Caco-2 (cell line): ENCODE measurements at regions of chr4 and their contacts with region 1.

Region 1: DNA sequence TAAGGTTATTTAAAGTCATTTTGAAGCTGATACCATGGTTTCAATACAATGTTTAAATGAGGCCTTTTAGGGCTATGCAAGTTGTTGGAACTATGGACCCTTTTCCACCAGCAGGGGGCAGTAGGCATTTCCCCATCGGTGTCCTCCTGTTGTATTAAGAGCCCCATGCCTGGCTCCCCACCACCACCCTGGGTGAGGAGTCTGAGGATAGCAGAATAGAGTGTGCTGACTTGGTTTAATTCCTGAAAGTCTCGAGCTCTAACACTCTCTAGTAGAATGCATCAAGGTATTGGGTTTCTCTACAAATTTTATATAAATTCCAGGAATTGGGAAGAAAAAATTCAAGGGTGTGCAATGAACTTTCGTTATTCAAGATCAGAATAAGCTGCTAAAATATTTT is 234.8 kb upstream of the JADE1 start:
- DNase-seq: peak; percentile 71 to 84
- H3K4me3 ChIP-seq: no peak overlapping the region
- H3K4me3 Mint-ChIP-seq: no peak overlapping the region
- H3K27ac Mint-ChIP-seq: peak overlapping the region; percentile 81
- H3K4me1 ChIP-seq: peaks cover 41% of the 10 kb centered on the region
- H3K4me1 Mint-ChIP-seq: peaks cover 34% of the 10 kb centered on the region
- H3K27me3 ChIP-seq: no peaks in the 10 kb centered on the region
- H3K27me3 Mint-ChIP-seq: no peaks in the 10 kb centered on the region
- CTCF ChIP-seq: peak; percentile 41 to 77

Region 2: DNA sequence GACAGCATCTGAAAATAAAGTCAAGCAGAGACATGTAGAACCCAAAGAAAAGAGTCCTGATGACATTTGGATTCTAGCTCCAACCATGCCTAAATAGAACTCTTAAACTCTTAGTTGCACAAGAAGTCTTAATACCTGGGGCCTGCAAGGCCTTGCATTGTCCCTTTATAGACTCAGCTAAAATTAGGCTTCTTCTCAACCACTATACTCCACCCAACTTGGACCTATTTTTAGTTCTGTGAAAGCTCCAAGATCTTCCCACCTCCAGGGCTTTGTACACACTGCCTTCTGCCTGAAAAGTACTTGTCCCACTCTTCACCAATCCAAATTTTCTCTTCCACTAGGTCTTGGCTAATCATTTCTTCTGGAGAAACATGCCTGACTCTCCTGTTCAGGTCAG is 657.6 kb before region 1 on chr4:
- CTCF ChIA-PET with region 1: no interaction called
- POLR2A ChIA-PET with region 1: no interaction called
- intact Hi-C with region 1: no loop called
- DNase-seq: no peak
- H3K4me3 ChIP-seq: no peak overlapping the region
- H3K4me3 Mint-ChIP-seq: no peak overlapping the region
- H3K27ac Mint-ChIP-seq: no peak overlapping the region
- H3K4me1 ChIP-seq: no peaks in the 10 kb centered on the region
- H3K4me1 Mint-ChIP-seq: no peaks in the 10 kb centered on the region
- H3K27me3 ChIP-seq: no peaks in the 10 kb centered on the region
- H3K27me3 Mint-ChIP-seq: no peaks in the 10 kb centered on the region
- CTCF ChIP-seq: no peak

Region 3: DNA sequence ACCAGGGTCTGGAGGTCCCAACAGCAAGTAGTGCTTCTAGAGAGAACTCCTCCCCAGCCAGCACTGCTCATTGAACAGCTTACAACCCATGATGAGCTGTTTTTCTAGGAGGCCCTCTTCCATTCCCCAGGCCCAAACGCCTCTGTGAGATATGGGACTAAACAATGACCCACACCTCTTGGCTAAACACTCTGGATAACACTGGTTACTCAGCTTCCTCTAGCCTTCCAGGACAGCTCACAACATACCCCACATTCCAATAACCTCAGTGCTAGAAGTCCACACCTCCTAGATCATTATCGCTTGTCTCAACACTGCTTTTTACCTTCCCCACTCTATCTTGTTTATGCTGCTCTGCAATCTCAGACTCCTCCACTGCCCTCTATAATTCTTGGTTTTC is 251.7 kb before region 1 on chr4:
- CTCF ChIA-PET with region 1: no interaction called
- POLR2A ChIA-PET with region 1: no interaction called
- intact Hi-C with region 1: loop called (anchors 5 kb)
- DNase-seq: peak; percentile 73 to 82
- H3K4me3 ChIP-seq: no peak overlapping the region
- H3K4me3 Mint-ChIP-seq: no peak overlapping the region
- H3K27ac Mint-ChIP-seq: no peak overlapping the region
- H3K4me1 ChIP-seq: peaks cover 43% of the 10 kb centered on the region
- H3K4me1 Mint-ChIP-seq: peaks cover 5% of the 10 kb centered on the region
- H3K27me3 ChIP-seq: no peaks in the 10 kb centered on the region
- H3K27me3 Mint-ChIP-seq: no peaks in the 10 kb centered on the region
- CTCF ChIP-seq: no peak

Region 4: DNA sequence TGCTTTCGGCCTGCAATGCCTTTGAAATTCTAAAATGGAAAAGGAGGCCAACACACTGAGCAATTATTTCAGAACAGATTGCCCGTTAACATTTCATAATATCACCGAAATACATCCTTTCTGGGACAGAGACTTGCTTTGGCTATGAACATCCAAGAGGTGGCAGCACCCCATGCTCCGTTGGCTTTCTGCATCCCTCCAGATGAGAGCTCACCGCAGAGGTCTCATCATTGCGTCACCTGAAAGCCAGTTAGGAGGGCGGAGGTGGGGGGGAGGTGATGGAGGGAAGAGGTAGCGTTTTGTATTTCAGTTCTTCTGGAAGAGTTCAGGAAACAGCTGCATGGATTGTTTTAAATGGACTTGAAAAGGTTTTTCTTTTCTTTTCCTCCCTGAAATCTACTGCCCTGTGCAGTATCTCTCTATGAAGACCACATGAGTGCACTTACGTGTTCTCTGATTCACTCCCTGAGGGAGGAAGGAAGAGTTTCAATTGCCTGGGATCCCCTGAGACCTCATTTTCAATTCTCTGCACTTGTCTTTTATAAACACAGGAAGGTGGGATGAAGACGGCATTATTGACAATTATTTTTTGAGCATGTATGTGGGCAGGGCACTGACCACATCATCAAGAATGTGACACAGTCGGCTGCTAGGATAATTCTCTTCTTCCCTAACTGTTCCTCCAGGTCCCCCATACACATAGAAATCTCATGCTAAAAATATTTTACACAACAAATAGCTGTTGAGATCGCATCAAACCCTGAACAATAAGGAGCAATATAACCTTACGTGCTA is 120.2 kb before region 1 on chr4:
- CTCF ChIA-PET with region 1: interaction called, 6 read pairs
- POLR2A ChIA-PET with region 1: no interaction called
- intact Hi-C with region 1: loop called (anchors 1 kb)
- DNase-seq: peak; percentile 78 to 82
- H3K4me3 ChIP-seq: no peak overlapping the region
- H3K4me3 Mint-ChIP-seq: no peak overlapping the region
- H3K27ac Mint-ChIP-seq: no peak overlapping the region
- H3K4me1 ChIP-seq: no peaks in the 10 kb centered on the region
- H3K4me1 Mint-ChIP-seq: peaks cover 7% of the 10 kb centered on the region
- H3K27me3 ChIP-seq: no peaks in the 10 kb centered on the region
- H3K27me3 Mint-ChIP-seq: no peaks in the 10 kb centered on the region
- CTCF ChIP-seq: peak; percentile 72 to 77

Region 5: GRCh38 chr4:128635141-128635954 is 60.6 kb after region 1 on chr4:
- CTCF ChIA-PET with region 1: no interaction called
- POLR2A ChIA-PET with region 1: no interaction called
- intact Hi-C with region 1: loop called (anchors 1 kb)
- DNase-seq: peak; percentile 89 to 90
- H3K4me3 ChIP-seq: 0 out of 2 replicates have a peak overlapping the region, but pooled peaks have one; percentile 11
- H3K4me3 Mint-ChIP-seq: peak overlapping the region; percentile 76
- H3K27ac Mint-ChIP-seq: peak overlapping the region; percentile 98
- H3K4me1 ChIP-seq: peaks cover 14% of the 10 kb centered on the region
- H3K4me1 Mint-ChIP-seq: peaks cover 25% of the 10 kb centered on the region
- H3K27me3 ChIP-seq: no peaks in the 10 kb centered on the region
- H3K27me3 Mint-ChIP-seq: no peaks in the 10 kb centered on the region
- CTCF ChIP-seq: no peak

Region 6: GRCh38 chr4:128776794-128777216 is 202.1 kb after region 1 on chr4:
- CTCF ChIA-PET with region 1: no interaction called
- POLR2A ChIA-PET with region 1: no interaction called
- intact Hi-C with region 1: loop called (anchors 1 kb)
- DNase-seq: peak; percentile 15 to 40
- H3K4me3 ChIP-seq: no peak overlapping the region
- H3K4me3 Mint-ChIP-seq: peak overlapping the region; percentile 48
- H3K27ac Mint-ChIP-seq: peak overlapping the region; percentile 37
- H3K4me1 ChIP-seq: peaks cover 21% of the 10 kb centered on the region
- H3K4me1 Mint-ChIP-seq: peaks cover 19% of the 10 kb centered on the region
- H3K27me3 ChIP-seq: no peaks in the 10 kb centered on the region
- H3K27me3 Mint-ChIP-seq: no peaks in the 10 kb centered on the region
- CTCF ChIP-seq: no peak

Region 7: GRCh38 chr4:128847082-128847724 is 272.5 kb after region 1 on chr4:
- CTCF ChIA-PET with region 1: no interaction called
- POLR2A ChIA-PET with region 1: no interaction called
- intact Hi-C with region 1: no loop called
- DNase-seq: no peak
- H3K4me3 ChIP-seq: no peak overlapping the region
- H3K4me3 Mint-ChIP-seq: no peak overlapping the region
- H3K27ac Mint-ChIP-seq: no peak overlapping the region
- H3K4me1 ChIP-seq: no peaks in the 10 kb centered on the region
- H3K4me1 Mint-ChIP-seq: no peaks in the 10 kb centered on the region
- H3K27me3 ChIP-seq: no peaks in the 10 kb centered on the region
- H3K27me3 Mint-ChIP-seq: no peaks in the 10 kb centered on the region
- CTCF ChIP-seq: no peak

Region 8: GRCh38 chr4:129093191-129093920 is 518.6 kb after region 1 on chr4 and contains the start of gene SCLT1:
- CTCF ChIA-PET with region 1: no interaction called
- POLR2A ChIA-PET with region 1: interaction called, 3 read pairs
- intact Hi-C with region 1: loop called (anchors 10 kb)
- DNase-seq: peak; percentile 97
- H3K4me3 ChIP-seq: peak within 1 kb of the TSS; percentile 80
- H3K4me3 Mint-ChIP-seq: no peak within 1 kb of the TSS
- H3K27ac Mint-ChIP-seq: no peak within 1 kb of the TSS
- H3K4me1 ChIP-seq: peaks cover 11% of the 10 kb centered on the region; the same call in 1 of the 2 replicates
- H3K4me1 Mint-ChIP-seq: peaks cover 8% of the 10 kb centered on the region
- H3K27me3 ChIP-seq: no peaks in the 10 kb centered on the region
- H3K27me3 Mint-ChIP-seq: no peaks in the 10 kb centered on the region
- CTCF ChIP-seq: no peak
- total RNA-seq, gene SCLT1: 9.3 and 10.9 TPM in 2 replicates